Dorsolateral prefrontal cortex (tissue), 120 donors: ENCODE measurements at regions of chr4 and their contacts with region 1.

Region 1: GRCh38 chr4:24472514-24473308 is 111.6 kb downstream of the DHX15 start:
- DNase-seq: peak; percentile 70 to 90 (median 83)
- H3K4me3 ChIP-seq: peak overlapping the region; percentile 51 to 86 (median 71)
- H3K27ac ChIP-seq: peak overlapping the region in 58 of 59 donors; percentile 11 to 86 (median 76)
- H3K27me3 ChIP-seq: peaks cover 0 to 7% (median 0%) of the 10 kb centered on the region in 45 donors
- CTCF ChIP-seq: peak in 51 of 56 donors; percentile 9 to 70 (median 49)

Region 2: GRCh38 chr4:24105183-24106038 is 367.3 kb before region 1 on chr4:
- intact Hi-C with region 1: loop called in 1 of 2 experiments (anchors 10 kb)
- DNase-seq: peak in 2 of 10 donors; percentile 39 to 48
- H3K4me3 ChIP-seq: no peak overlapping the region
- H3K27ac ChIP-seq: peak overlapping the region in 16 of 59 donors; percentile 12 to 74 (median 38)
- H3K27me3 ChIP-seq: no peaks in the 10 kb centered on the region
- CTCF ChIP-seq: no peak